Gastrocnemius medialis (tissue), 4 donors: ENCODE measurements at regions of chr1 and their contacts with region 1.

Region 1: DNA sequence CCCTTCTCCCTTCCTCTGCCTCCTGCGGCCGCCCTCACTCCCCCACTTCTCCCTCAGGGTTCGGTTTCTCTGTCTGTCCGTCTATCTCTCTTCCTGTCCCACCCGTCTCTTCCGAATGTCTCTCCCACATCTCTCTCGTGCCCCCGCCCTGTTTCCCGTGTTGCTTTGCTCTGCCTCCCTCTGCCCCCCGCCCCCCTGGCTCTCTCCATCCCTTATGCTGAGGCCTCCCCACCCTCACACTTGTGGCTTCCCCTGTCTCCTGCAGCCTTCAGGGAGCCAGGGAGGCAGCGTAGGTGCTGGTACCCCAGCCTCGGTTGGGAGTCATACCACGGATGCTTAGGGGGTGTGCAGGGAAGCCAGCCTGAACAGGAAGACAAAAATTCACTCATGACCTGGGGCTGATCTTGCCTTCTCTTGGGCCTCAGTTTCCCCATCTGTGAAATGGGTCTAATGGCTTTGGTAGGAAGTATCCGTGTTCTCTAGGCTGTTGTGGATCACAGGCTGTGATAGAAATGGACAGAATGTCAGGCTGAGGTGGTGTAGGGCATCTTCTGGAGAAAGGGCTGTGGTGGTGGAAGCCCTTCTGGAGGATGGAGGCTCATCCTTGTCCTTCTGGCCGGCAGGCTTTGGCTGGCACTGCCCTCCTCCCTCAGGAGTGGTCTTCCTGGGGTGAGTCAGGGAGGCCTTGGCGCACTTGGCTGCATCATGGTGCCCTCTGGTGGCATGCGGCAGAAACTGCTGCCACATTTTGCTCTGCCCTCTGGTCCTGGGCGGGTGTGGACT is 55.5 kb downstream of the FOXO6 start:
- DNase-seq: peak in 1 of 2 donors; percentile 67
- ATAC-seq: peak in 1 of 2 donors; percentile 25
- H3K4me3 ChIP-seq: no peak overlapping the region
- H3K27ac ChIP-seq: peak overlapping the region in 1 of 4 donors; percentile 88
- H3K4me1 ChIP-seq: peaks cover 38 to 46% of the 10 kb centered on the region in 2 donors
- H3K27me3 ChIP-seq: no peaks in the 10 kb centered on the region
- CTCF ChIP-seq: peak; percentile 90 to 97 (median 93)
- POLR2A ChIP-seq: no peak

Region 2: GRCh38 chr1:41268154-41268770 is 148.5 kb before region 1 on chr1:
- in situ Hi-C with region 1: no loop called
- intact Hi-C with region 1: loop called (anchors 1 kb)
- DNase-seq: peak; percentile 45 to 71
- ATAC-seq: peak; percentile 76 to 90
- H3K4me3 ChIP-seq: no peak overlapping the region
- H3K27ac ChIP-seq: no peak overlapping the region
- H3K4me1 ChIP-seq: peaks cover 0 to 3% of the 10 kb centered on the region in 2 donors
- H3K27me3 ChIP-seq: no peaks in the 10 kb centered on the region
- CTCF ChIP-seq: peak; percentile 90 to 99 (median 95)
- POLR2A ChIP-seq: no peak

Region 3: GRCh38 chr1:41322835-41323627 is 93.7 kb before region 1 on chr1:
- in situ Hi-C with region 1: loop called in 2 of 4 experiments (anchors 5 to 10 kb)
- intact Hi-C with region 1: loop called (anchors 1 kb)
- DNase-seq: peak; percentile 47 to 75
- ATAC-seq: peak; percentile 78 to 83
- H3K4me3 ChIP-seq: no peak overlapping the region
- H3K27ac ChIP-seq: no peak overlapping the region
- H3K4me1 ChIP-seq: peaks cover 13 to 28% of the 10 kb centered on the region in 2 donors
- H3K27me3 ChIP-seq: no peaks in the 10 kb centered on the region
- CTCF ChIP-seq: peak; percentile 72 to 86 (median 75)
- POLR2A ChIP-seq: no peak

Region 4: DNA sequence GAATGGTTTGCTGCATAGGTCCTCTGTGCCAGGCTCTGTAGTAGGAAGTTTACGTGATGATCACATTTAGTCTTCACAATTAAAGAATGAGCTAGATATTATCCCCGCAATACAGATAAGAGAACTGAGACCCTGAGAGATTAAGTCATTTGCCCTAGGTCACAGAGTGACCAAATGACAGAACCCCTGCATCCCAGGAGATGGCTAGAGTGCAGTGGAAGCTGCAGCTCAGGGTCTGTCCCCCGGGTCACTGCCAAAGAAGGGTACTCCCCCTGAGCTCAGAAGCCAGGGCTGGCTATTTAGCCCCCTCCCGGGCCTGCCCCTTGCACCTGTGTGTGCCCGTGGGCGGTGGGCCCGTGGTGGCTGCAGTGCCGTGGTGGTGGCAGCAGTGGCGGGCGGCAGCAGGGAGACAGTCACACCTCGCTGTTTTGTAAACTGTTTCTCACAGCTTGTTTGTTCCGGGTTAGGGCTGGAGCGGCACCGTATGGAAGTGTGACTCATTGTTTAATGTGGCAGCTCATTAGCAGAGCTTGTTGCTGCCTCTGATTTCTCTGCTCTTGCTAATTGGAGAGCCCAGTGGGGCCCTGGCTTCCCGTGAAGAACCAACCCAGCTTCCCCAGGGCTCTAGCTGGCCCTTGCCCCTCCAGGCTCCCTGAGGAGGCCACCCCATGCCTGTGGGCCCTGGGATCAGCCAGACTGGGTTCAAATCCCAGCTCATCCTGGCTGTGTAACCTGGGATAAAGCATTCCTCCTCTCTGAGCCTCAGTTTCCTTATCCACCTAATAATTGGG is 74.8 kb before region 1 on chr1:
- in situ Hi-C with region 1: no loop called
- intact Hi-C with region 1: loop called (anchors 1 kb)
- DNase-seq: peak in 1 of 2 donors; percentile 71
- ATAC-seq: peak; percentile 62 to 81
- H3K4me3 ChIP-seq: peak overlapping the region in 1 of 4 donors; percentile 6
- H3K27ac ChIP-seq: peak overlapping the region; percentile 86 to 98 (median 92)
- H3K4me1 ChIP-seq: peaks cover 33% of the 10 kb centered on the region in 2 donors
- H3K27me3 ChIP-seq: no peaks in the 10 kb centered on the region
- CTCF ChIP-seq: peak in 1 of 5 experiments; percentile 9
- POLR2A ChIP-seq: no peak

Region 5: GRCh38 chr1:41353726-41354125 is 63.0 kb before region 1 on chr1:
- in situ Hi-C with region 1: no loop called
- intact Hi-C with region 1: no loop called
- DNase-seq: no peak
- ATAC-seq: no peak
- H3K4me3 ChIP-seq: no peak overlapping the region
- H3K27ac ChIP-seq: no peak overlapping the region
- H3K4me1 ChIP-seq: peaks cover 19% of the 10 kb centered on the region in 2 donors
- H3K27me3 ChIP-seq: no peaks in the 10 kb centered on the region
- CTCF ChIP-seq: no peak
- POLR2A ChIP-seq: no peak

Region 6: DNA sequence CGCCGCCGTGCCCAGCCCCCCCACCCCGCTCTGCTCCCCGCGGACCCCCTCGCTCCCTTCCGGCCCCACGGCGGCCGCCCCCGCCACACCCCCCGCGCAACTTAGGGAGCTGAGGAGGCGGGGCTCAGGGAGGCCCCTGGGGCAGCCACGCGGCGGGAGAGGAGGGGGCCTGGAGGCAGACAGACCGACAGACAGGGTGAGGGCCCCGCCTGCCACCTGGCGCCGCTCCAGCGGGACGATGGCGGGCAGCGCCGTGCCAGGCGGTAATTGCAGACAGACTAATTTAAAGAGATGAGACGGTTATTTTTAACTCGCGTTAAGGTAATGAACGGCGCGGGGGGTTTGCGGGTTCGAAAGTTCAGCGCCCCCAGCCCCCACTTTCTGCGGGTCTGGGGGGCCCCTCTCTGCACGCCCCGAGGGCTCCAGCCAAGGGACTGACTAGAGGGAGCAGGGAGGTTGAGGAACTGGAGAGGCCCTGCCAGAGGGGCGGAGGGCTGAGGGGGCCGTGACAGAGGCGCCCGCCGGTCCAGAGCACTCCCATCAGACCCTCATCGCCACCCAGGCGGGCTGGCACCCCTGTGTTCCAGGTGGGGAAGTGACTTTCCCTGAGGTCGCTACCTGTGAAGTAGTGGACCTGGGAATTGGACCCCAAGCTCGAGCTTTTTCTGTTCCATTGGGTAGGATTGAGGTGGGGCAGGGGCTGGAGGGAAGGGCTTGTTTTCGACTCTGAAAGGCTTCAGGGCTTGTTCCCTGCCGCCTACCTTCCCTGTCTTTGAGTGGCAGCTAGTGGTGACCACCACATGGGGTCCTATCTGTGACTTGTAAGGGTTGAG is 50.1 kb before region 1 on chr1:
- in situ Hi-C with region 1: loop called in 3 of 4 experiments (anchors 5 to 10 kb)
- intact Hi-C with region 1: loop called (anchors 1 kb)
- DNase-seq: no peak
- ATAC-seq: no peak
- H3K4me3 ChIP-seq: peak overlapping the region; percentile 47 to 62 (median 58)
- H3K27ac ChIP-seq: peak overlapping the region; percentile 36 to 64 (median 50)
- H3K4me1 ChIP-seq: peaks cover 23 to 37% of the 10 kb centered on the region in 2 donors
- H3K27me3 ChIP-seq: no peaks in the 10 kb centered on the region
- CTCF ChIP-seq: no peak
- POLR2A ChIP-seq: no peak

Region 7: DNA sequence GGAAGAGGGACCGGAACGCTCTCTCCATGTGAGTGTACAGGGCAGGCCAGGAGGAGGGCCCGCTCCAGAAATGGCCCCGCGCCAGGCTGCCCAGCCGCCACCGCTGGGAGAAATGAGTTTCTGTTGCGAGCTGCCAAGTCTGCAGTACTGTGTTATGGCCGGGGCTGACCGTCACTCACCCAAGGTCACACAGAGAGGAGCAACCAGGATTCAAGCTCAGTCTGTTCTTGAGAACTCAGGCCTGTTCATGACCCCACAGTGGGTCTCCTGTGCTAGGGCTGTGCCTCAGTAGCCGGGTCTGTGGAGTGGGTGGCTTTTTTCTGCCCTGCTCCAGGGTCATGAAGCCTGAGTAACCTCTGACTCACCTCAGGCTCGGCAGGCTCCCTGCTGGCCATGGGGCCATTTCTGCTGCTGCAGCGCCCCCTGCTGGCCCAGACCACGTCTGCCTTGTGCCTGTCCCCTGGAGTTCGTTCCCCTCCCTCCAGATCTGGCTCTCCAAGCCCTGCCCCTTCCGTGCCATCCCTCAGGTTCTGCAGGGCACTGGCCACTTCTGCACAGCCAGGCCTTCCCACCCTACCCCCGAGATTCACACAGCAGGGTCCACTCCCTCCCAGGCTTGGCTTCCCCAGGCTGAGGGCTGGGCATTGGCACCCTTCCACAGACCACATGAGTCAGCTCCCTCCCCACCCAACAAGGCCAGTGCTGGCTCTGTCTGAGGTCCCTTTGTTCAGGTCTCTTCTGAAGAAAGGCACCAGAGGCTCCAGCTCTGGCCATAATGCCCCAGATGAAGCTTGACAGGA is 15.9 kb after region 1 on chr1:
- in situ Hi-C with region 1: no loop called
- intact Hi-C with region 1: loop called (anchors 1 kb)
- DNase-seq: peak; percentile 81 to 94
- ATAC-seq: peak; percentile 91 to 96
- H3K4me3 ChIP-seq: peak overlapping the region in 2 of 4 donors; percentile 11 to 29
- H3K27ac ChIP-seq: peak overlapping the region; percentile 55 to 70 (median 67)
- H3K4me1 ChIP-seq: peaks cover 14 to 19% of the 10 kb centered on the region in 2 donors
- H3K27me3 ChIP-seq: no peaks in the 10 kb centered on the region
- CTCF ChIP-seq: peak; percentile 91 to 99 (median 97)
- POLR2A ChIP-seq: no peak

Region 8: DNA sequence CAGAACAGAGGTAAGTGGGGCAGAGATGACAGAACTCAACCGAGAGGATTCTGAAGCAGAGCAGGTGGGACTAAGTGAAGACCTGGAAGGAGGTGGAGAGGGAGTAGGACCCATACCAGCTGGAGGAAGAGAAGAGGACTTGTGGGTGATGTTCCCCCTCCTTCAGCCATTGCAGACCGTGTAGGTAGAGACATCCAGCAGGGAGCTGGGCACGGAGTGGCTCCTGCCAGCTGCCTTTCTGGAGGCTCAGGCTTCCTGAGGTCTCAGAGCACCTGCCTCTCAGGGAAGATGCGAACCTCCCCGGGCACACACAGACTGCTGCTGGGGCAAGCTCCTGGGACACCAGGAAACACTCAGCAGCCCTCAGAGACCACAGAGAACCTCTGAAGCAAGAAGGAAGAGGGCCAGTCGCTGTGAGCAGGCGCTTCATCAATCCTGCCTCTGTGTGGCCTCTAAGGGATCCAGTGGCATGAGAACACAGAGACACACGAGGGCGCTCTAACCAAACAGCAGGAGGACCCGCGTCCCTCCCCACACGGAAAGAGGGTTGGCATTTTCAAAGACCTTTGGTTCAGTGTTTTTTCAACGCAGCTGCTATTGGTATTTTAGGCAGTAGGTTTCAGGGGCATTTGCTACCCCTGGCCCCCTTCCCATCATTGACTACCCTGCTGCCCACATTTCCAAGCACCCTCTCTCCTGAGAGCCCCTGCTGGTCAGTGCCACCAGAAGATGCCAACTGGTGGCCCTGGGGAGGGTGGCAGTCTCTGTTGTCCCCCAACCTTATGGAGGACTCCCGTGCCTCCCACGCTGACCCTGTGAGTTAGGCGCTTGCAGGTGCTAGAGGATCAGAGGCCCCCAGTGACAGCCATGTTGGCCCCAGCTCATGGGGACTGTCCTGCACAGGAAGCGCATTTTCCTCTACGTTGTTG is 157.3 kb after region 1 on chr1:
- in situ Hi-C with region 1: no loop called
- intact Hi-C with region 1: no loop called
- DNase-seq: peak; percentile 48 to 71
- ATAC-seq: peak; percentile 88 to 95
- H3K4me3 ChIP-seq: no peak overlapping the region
- H3K27ac ChIP-seq: no peak overlapping the region
- H3K4me1 ChIP-seq: peaks cover 3 to 7% of the 10 kb centered on the region in 2 donors
- H3K27me3 ChIP-seq: no peaks in the 10 kb centered on the region
- CTCF ChIP-seq: peak; percentile 79 to 91 (median 84)
- POLR2A ChIP-seq: no peak